MCF 10A (cell line): ENCODE measurements at regions of chr7 and their contacts with region 1.

Region 1: DNA sequence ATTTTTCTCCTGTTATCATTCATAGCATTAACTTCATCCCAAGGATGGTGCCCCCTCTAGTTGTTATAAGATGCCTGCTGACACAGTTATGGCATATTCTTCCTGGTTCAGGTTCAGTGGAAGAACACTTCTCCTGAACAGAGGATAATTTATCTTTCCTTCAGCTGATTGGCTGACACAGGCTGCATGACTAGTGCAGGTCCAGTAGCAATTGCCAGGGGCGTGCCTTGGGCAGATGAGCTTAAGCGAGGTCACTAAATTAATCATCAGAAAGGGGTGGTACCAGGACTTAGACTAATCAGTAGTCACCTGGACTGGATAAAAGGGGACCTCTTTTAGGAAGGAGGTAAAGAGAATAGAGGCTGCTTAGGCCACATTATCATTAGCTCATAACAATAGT is 42.3 kb downstream of the BZW2 start:
- DNase-seq: peak; percentile 16
- H3K4me3 Mint-ChIP-seq: no peak overlapping the region
- H3K27ac Mint-ChIP-seq: no peak overlapping the region
- H3K4me1 Mint-ChIP-seq: no peaks in the 10 kb centered on the region
- H3K27me3 Mint-ChIP-seq: no peaks in the 10 kb centered on the region
- CTCF ChIP-seq: no peak

Region 2: DNA sequence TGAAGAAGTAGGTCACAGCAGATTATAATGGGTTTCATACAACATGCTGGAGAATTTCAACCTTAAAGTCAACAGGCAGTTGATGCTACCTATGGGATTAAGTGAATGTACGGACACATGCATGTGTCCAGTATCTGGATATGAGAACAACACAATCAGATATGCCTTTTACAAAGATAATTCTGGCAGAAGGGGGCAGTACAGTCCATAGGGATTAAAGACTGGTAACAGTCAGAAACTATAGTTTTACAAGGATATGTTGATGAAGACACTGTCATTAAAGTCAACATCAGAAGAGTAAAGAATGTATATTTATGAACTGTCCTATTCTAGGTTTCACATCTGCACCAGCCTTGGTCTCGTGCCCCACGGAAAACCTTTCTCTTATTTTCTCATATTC is 84.2 kb before region 1 on chr7:
- CTCF ChIA-PET with region 1: no interaction called
- POLR2A ChIA-PET with region 1: no interaction called
- intact Hi-C with region 1: loop called (anchors 5 kb)
- DNase-seq: peak; percentile 41
- H3K4me3 Mint-ChIP-seq: no peak overlapping the region
- H3K27ac Mint-ChIP-seq: no peak overlapping the region
- H3K4me1 Mint-ChIP-seq: no peaks in the 10 kb centered on the region
- H3K27me3 Mint-ChIP-seq: no peaks in the 10 kb centered on the region
- CTCF ChIP-seq: peak; percentile 20